Cardiac septum (tissue), 1 donor: ENCODE measurements at regions of chr16 and their contacts with region 1.

Region 1: DNA sequence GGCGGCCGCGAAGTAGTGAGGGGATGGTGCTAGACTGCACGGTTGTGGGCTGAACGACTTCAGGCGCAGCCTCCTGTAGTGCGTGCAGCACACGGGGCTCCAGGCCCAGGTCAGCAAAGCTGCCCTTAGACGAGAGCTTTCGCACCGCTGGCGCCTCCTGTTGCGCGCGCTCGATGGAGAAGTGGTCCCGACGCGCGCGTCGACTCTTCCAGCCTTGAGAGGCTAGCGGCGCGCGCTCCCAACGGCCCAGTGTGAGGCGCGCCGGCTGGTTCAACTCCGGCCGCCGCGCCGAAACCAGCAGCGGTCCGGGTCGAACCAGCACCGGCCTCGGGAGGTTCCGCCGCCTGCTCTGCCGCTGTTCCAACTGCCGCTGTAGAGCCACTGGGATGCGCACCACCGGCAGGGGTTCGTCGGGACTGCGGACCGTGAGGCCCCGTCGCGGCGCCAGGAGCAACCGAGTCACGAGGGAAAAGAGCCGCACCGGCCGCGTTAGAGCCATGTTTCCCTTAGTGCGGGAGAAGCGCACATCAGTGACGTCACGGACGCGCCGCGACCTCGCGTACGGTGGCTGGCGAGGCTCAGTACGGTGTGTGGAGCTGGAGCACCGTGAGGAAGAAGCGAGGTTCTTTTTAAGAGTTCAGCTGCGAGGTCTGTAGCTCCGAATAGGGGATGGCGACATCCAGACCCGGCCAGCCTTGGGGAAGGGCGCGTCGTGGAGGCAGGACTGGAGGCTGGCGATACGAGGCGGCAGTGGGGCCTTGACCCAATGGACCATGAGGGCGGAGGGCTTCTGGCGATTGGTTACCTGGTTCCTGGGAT is at the starts of genes DDX28 and DUS2:
- DNase-seq: peak; percentile 96
- total RNA-seq, gene DDX28: 8.6 TPM
- total RNA-seq, gene DUS2: 6.4 TPM

Region 2: DNA sequence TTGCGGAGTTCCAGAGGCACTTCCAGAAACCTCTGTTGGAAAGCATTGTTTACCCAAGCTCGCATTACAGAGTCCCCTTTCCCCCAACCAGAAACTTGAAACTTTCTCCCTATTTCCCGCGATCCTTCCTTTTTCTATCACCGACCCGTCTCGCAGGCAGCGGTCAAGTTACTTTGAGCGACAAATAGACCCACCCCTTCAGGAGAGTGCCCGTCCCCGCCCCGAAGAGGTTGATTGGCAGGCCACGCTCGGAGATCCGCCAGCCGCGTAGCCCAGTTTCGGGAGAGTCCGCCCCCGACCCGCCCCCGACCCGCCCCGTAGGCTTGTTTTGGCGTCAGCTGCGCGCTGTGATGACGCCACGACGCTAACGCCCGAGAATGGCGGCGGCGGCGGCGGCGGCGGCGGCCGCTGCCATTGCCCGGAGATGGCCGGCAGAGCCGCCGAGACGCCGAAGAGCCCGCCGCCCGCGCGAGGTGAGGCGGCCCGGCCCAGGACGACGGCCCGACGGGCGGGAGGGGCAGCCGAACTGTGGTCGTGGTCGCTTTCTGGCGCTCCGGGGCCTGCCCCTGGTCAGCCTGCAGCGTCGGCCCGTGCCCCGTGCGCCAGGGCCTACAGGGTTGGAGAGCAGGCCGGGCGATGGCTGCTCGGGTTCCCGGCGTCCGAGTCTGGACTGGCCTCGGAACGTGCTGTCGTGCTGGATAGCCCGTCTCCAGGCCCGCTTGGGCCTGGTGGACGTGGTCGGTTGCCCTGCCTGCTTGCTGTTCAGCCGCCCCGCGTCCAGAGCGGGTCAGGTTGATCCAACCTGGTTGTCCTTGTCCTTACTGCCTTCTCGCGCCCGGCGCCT is 129.8 kb before region 1 on chr16 and contains the start of gene PSKH1:
- intact Hi-C with region 1: loop called (anchors 5 kb)
- DNase-seq: peak; percentile 99
- total RNA-seq, gene PSKH1: 22.6 TPM

Region 3: GRCh38 chr16:68146585-68146984 is 123.7 kb after region 1 on chr16:
- intact Hi-C with region 1: no loop called
- DNase-seq: no peak